Activated CD4-positive, alpha-beta memory T cell treated with anti-CD3 and anti-CD28 coated beads for 36 hours (primary cell): ENCODE measurements at regions of chr14 and their contacts with region 1.

Region 1: GRCh38 chr14:99982537-99983250 is 82.5 kb upstream of the EVL start:
- DNase-seq: peak; percentile 73
- H3K4me3 Mint-ChIP-seq: no peak overlapping the region
- H3K27ac Mint-ChIP-seq: no peak overlapping the region
- H3K4me1 Mint-ChIP-seq: peaks cover 8% of the 10 kb centered on the region
- H3K27me3 Mint-ChIP-seq: no peaks in the 10 kb centered on the region

Region 2: GRCh38 chr14:99737451-99737951 is 245.2 kb before region 1 on chr14:
- CTCF ChIA-PET with region 1: no interaction called
- POLR2A ChIA-PET with region 1: no interaction called
- intact Hi-C with region 1: no loop called
- DNase-seq: no peak
- H3K4me3 Mint-ChIP-seq: no peak overlapping the region
- H3K27ac Mint-ChIP-seq: no peak overlapping the region
- H3K4me1 Mint-ChIP-seq: no peaks in the 10 kb centered on the region
- H3K27me3 Mint-ChIP-seq: peaks cover 37% of the 10 kb centered on the region

Region 3: DNA sequence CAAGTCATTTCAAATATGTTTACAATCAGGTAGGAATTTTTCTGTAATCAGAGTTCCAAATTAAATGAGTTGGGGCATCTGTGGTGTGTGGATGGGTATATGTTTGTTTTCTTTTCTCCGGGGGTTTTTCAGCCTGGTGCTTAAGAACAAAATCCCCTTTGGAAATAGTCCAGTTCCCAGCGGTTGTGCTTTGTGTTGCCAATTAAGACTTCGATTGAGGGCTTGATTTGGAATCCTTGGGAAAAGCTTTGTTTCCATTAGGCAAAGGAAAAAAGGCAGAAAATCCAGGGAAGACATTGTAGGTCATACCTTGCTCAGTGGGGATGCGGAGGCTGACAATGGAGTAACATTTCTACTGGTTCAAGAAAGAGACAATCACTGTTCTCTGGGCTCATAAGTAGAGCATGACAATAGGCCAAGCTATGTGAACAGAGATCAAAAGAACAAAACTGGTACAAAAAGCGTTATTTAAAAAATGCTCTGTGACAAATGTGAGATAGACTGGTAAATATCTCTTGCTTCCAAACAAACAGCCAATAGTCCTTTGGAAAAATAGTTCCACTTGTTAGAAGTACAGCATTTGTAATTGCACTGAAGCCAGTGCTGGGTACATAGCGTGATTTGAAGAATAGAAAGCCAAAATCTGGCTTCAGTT is 109.8 kb before region 1 on chr14:
- CTCF ChIA-PET with region 1: no interaction called
- POLR2A ChIA-PET with region 1: no interaction called
- intact Hi-C with region 1: no loop called
- DNase-seq: no peak
- H3K4me3 Mint-ChIP-seq: no peak overlapping the region
- H3K27ac Mint-ChIP-seq: no peak overlapping the region
- H3K4me1 Mint-ChIP-seq: no peaks in the 10 kb centered on the region
- H3K27me3 Mint-ChIP-seq: peaks cover 30% of the 10 kb centered on the region

Region 4: GRCh38 chr14:99995700-99996356 is 13.1 kb after region 1 on chr14:
- CTCF ChIA-PET with region 1: interaction called, 5 read pairs
- POLR2A ChIA-PET with region 1: interaction called, 3 read pairs
- intact Hi-C with region 1: loop called (anchors 2 kb)
- DNase-seq: peak; percentile 78
- H3K4me3 Mint-ChIP-seq: no peak overlapping the region
- H3K27ac Mint-ChIP-seq: no peak overlapping the region
- H3K4me1 Mint-ChIP-seq: peaks cover 10% of the 10 kb centered on the region
- H3K27me3 Mint-ChIP-seq: peaks cover 7% of the 10 kb centered on the region

Region 5: DNA sequence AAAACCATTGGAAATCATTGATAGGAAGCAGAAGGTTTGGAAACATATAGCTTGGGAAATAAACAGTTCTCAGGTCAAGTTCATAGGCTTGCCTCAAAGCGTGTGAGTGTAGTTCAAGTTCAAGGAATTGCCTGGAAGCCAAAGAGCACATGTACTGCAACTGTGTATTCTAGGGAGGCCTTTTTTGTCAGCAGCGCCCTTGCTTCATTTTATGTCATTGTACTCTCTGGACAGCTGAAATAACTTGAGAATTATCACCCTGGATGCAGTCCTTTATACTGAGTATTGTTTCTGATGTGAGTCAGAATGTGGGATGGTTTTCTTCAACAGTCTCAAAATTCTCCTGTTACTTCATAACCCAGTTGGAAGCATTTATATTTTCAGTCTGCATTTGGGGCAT is 66.5 kb after region 1 on chr14:
- CTCF ChIA-PET with region 1: interaction called, 7 read pairs
- POLR2A ChIA-PET with region 1: no interaction called
- intact Hi-C with region 1: loop called (anchors 5 kb)
- DNase-seq: no peak
- H3K4me3 Mint-ChIP-seq: no peak overlapping the region
- H3K27ac Mint-ChIP-seq: no peak overlapping the region
- H3K4me1 Mint-ChIP-seq: peaks cover 16% of the 10 kb centered on the region
- H3K27me3 Mint-ChIP-seq: no peaks in the 10 kb centered on the region

Region 6: DNA sequence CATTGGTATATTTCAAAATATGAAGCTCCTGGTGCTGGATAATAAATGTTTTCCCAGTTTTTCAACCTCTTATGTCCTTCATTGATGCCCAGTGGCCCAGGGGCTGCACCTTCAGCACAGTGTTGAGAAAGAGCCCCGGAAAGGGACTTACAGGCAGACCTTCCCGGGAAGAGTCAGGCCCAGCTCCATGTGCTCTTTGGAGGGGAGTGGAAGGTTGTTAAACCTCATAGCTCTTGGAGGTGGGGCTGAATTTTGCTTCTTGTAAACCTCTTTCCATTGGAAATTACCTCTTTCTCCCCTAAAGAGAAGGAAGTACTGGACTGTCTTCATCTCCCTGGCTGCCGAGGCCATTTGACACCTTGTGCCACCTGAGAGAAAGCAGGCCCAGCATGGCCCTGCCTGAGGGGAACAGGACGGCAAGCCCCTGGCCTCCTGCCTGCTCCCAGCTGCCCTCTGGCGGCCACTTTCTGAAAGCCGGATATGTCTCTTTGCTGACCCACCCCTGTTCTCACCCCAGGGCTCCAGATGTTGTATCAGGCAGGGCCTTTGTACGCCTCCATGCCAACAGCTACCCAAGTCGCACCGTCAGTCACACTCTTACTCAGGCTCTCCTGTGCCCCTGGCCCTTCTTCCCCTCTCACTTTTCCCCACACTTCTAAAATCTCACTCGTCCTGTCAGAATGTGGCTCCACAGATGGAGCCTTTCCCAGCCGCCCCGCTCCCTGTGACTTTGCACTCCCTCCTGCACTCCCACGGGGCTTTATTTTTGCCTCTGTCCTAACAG is 125.5 kb after region 1 on chr14:
- CTCF ChIA-PET with region 1: interaction called, 64 read pairs
- POLR2A ChIA-PET with region 1: no interaction called
- intact Hi-C with region 1: loop called (anchors 1 kb)
- DNase-seq: peak; percentile 92
- H3K4me3 Mint-ChIP-seq: peak overlapping the region; percentile 4
- H3K27ac Mint-ChIP-seq: peak overlapping the region; percentile 90
- H3K4me1 Mint-ChIP-seq: peaks cover 62% of the 10 kb centered on the region
- H3K27me3 Mint-ChIP-seq: no peaks in the 10 kb centered on the region